Activated B cell treated with CpG ODN at 0.5 μM for 24 hours (primary cell): ENCODE measurements at regions of chr11 and their contacts with region 1.

Region 1: DNA sequence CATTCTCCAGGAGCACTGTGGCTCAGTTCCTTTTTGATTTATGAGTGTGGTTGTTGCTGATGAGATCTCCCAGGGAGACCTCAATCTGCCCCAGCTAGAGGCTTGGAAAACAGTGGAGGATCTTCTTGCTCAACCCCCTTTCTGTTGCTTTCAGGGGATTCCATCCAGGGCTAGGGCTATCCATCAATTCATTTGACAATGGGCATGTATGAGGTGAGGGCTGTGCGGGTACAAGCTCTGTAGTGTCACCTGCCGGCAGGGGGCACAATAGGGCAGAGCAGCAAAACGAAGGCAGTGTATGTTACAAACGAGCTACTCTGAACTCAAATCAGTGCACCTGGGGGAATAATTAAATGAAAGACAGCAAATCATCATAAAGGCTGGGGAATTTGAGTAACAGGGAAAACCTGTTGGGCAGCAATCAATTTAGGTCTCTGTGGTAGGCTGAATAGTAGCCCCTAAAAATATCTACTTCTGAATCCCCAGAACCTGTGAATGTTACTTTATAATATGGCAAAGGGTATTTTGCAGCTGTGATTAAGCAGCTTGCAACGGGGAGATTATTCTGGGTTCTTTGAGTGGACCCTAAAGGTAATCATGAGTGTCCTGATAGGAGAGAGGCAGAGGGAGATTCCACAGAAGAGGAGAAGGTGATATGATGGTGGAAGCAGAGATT is 170.3 kb upstream of the ZBED5 start:
- DNase-seq: peak; percentile 55
- ATAC-seq: peak; percentile 73
- H3K4me3 Mint-ChIP-seq: no peak overlapping the region
- H3K27ac Mint-ChIP-seq: no peak overlapping the region
- H3K4me1 Mint-ChIP-seq: no peaks in the 10 kb centered on the region
- H3K27me3 Mint-ChIP-seq: peaks cover 7% of the 10 kb centered on the region
- CTCF ChIP-seq: no peak

Region 2: DNA sequence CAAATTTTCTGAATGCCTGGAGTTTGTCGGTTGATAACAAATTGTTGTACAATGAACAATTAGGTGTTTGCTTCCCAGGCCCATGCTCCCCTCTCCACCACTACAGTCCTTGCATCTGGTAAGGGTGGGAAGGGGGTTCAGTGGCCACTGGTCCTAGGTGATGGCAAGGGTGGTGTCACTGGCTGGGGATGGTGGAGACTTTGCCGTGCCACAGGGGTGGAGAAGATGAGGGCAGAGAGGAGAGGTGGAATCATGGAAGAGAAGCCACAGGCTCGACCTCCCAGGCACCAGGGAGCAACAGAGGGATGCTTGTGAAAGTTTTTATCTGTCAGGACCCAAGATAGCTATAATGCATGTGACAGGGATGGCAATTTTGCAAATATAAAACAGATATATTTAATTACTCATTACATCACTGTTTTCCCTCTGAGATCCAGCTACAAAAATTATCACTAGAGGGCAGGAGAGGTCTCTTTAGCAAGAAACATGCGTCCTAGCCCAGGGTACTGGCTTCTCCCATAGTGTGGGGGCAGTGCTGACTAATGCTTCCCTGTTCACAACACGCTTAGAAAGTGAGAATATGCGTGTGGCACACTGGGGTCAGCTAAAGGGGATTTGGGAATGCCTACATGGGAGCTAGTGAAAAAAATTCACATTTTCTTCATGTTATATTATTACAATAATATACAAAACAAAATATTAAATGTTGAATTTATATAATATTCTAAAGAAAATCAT is 622.1 kb before region 1 on chr11:
- CTCF ChIA-PET with region 1: no interaction called
- POLR2A ChIA-PET with region 1: no interaction called
- intact Hi-C with region 1: loop called (anchors 10 kb)
- DNase-seq: no peak
- ATAC-seq: peak; percentile 94
- H3K4me3 Mint-ChIP-seq: no peak overlapping the region
- H3K27ac Mint-ChIP-seq: no peak overlapping the region
- H3K4me1 Mint-ChIP-seq: peaks cover 6% of the 10 kb centered on the region
- H3K27me3 Mint-ChIP-seq: no peaks in the 10 kb centered on the region
- CTCF ChIP-seq: peak; percentile 51

Region 3: GRCh38 chr11:10941414-10941813 is 86.7 kb before region 1 on chr11:
- CTCF ChIA-PET with region 1: interaction called, 12 read pairs
- POLR2A ChIA-PET with region 1: no interaction called
- intact Hi-C with region 1: no loop called
- DNase-seq: no peak
- ATAC-seq: no peak
- H3K4me3 Mint-ChIP-seq: no peak overlapping the region
- H3K27ac Mint-ChIP-seq: no peak overlapping the region
- H3K4me1 Mint-ChIP-seq: no peaks in the 10 kb centered on the region
- H3K27me3 Mint-ChIP-seq: peaks cover 3% of the 10 kb centered on the region
- CTCF ChIP-seq: no peak

Region 4: DNA sequence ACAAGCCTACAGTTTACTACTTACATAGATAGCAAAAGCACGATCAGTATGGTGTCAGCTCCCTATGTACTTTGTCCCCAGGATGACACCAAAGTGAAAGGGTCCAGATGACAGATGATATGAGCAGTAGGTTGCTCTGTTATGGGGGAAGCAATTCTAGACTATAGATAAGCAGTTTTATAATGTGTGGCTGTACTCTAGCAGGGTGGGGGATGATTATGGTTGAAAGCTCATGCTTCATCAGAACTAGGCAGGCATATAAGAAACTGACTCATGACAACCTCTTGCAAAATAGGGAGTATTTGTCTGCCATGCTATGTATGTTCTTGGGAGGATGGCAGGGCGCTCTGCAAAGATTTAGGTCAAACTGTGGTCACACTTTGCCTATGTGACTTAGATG is 12.1 kb before region 1 on chr11:
- CTCF ChIA-PET with region 1: interaction called, 13 read pairs
- POLR2A ChIA-PET with region 1: no interaction called
- intact Hi-C with region 1: no loop called
- DNase-seq: no peak
- ATAC-seq: no peak
- H3K4me3 Mint-ChIP-seq: no peak overlapping the region
- H3K27ac Mint-ChIP-seq: no peak overlapping the region
- H3K4me1 Mint-ChIP-seq: peaks cover 16% of the 10 kb centered on the region
- H3K27me3 Mint-ChIP-seq: no peaks in the 10 kb centered on the region
- CTCF ChIP-seq: no peak

Region 5: DNA sequence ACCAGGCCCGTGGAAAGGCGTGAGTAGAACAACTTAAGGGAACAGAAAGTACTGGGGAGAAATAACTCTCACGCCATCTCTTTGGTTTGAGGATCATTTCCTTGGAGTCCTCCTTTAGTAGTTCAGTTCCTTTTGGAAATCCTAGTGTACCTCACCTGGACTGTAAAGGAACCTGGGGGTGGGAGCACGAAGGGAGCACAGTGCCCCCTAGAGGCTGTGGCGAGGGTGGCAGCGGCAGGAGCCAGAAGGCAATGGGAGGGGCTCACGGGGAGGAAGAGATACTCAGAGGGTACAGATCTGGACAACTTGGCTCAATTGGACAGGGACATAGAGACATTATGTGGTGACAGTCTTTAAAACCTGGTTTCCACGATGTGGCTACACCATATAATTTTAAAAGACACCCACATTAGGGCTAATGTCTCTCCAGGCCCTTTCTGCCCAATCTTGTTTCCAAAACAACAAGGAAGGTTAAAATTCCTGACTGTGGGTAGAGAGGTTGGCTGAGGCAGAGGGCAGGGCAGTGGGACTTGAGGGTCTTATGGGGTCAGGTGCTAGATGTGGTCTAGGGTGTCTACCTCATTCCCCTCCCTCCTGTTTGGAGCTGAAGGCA is 237.9 kb after region 1 on chr11:
- CTCF ChIA-PET with region 1: interaction called, 3 read pairs
- POLR2A ChIA-PET with region 1: no interaction called
- intact Hi-C with region 1: loop called (anchors 2 kb)
- DNase-seq: no peak
- ATAC-seq: no peak
- H3K4me3 Mint-ChIP-seq: no peak overlapping the region
- H3K27ac Mint-ChIP-seq: no peak overlapping the region
- H3K4me1 Mint-ChIP-seq: peaks cover 26% of the 10 kb centered on the region
- H3K27me3 Mint-ChIP-seq: no peaks in the 10 kb centered on the region
- CTCF ChIP-seq: no peak

Region 6: DNA sequence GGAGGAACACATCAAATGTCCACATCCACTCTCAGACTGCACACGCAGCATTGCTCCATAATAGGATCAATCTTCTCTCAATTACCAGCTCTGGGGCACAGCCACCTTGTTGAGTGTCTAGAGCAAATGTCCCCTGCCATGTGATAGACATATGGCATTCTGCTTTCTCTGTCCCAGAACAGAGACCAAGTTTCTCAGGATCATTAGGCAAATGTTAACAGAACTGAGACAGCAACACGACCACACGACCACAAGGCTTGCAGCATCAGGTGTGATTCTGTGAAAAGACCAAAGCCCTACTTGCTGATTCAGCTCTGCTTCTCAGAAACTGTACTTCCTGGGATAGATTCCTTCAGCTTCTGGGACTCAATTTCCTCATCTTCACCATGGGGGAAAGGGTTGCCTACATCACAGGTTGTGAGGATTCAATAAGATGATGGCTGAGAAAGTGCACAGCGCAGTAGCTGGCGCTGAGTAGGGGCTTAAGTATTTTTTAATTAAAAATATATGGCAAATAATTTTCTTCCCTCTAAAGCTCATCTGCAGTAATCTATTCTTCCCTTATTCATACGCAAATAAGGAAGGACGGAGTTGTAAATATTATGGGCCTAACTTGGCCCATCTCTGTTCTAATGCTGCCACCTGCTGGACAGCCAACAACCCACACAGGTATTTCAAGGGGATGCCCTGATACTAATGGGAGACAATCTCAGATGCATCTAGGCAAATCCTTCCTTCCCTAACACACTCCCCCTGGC is 759.3 kb after region 1 on chr11:
- CTCF ChIA-PET with region 1: interaction called, 65 read pairs
- POLR2A ChIA-PET with region 1: no interaction called
- intact Hi-C with region 1: loop called (anchors 1 kb)
- DNase-seq: peak; percentile 33
- ATAC-seq: peak; percentile 85
- H3K4me3 Mint-ChIP-seq: no peak overlapping the region
- H3K27ac Mint-ChIP-seq: no peak overlapping the region
- H3K4me1 Mint-ChIP-seq: no peaks in the 10 kb centered on the region
- H3K27me3 Mint-ChIP-seq: peaks cover 9% of the 10 kb centered on the region
- CTCF ChIP-seq: peak; percentile 81